Pancreas (tissue), 10 donors: ENCODE measurements at regions of chr7 and their contacts with region 1.

Region 1: DNA sequence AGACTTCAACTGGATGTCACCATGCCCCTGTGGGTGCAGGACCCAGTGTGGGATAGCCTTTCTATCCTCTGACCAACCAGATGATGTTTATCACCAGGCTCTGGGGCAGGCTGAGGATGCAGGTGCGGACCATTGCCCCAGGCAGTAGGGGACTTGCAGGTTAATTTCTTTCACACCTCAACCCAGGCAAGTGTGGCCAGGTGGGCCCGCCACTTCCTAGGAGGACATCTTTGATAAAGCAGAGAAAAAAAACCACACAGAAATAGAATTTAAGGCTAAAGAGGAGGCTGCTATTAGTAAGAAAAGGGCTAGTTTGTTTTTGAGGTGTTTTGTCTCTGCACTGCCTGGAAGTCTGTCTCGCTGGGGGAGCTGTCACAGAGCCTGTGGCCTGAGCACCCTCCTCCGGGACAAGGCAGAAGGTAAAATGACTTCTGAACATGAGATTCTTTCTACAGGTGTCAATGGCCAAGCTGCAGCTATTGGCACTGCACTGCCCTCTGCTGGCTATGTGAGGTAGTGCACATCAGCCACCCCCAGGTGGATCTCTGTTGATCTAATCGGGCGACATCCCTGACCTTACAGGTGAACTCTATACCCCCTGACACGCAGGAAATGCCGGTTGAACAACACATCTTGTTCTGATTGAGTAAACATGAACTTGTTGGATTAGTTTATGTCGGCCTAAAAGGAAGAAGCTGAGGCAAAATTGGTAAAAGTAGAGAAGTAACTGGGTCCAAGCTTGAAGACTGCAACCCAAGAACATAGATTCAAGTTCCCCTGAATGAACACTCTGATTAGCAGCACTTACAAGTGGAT is 21.0 kb downstream of the UPP1 start:
- DNase-seq: peak; percentile 65 to 96 (median 85)
- ATAC-seq: peak; percentile 87 to 99 (median 94)
- H3K4me3 ChIP-seq: no peak overlapping the region
- H3K27ac ChIP-seq: no peak overlapping the region
- H3K4me1 ChIP-seq: peaks cover 0 to 4% (median 0%) of the 10 kb centered on the region in 3 donors
- H3K27me3 ChIP-seq: no peaks in the 10 kb centered on the region
- CTCF ChIP-seq: peak; percentile 98 to 99 (median 99)

Region 2: DNA sequence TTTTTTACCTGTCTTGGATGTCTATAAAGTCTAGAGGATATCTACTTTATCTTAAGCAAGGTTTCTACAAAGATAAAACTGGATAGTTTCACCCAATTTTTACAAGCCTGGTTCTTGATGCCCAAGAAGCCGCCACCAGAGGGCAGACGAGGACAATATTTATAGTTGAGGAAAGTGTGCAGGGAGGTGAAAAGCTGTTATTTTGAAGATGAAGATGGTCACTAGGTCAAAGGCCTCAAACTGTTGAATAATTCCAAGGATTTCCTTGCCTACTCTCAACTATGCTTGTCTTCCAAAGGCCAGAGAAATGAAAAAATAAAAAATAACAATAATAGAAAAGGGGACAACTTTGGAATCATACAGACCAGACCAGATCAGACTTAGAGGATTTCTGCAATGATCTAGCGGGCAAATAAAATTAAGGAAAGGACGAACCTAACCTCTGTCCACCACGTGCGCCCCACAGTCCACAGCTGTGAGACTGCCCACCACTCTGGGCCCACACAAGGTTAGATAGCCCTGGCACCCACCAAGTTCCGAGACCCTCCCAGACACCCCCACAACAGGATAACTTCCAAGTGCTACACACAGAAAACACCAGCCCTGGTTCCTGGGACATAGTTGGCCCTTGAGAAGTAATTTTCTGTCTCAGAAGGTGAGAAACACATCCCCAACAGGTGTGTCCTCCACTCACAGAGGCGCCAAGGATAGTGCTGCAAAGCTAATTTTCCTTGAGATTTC is 164.6 kb before region 1 on chr7:
- intact Hi-C with region 1: loop called in 2 of 3 experiments (anchors 5 kb)
- DNase-seq: peak in 5 of 6 donors; percentile 45 to 91 (median 72)
- ATAC-seq: peak; percentile 63 to 87 (median 76)
- H3K4me3 ChIP-seq: no peak overlapping the region
- H3K27ac ChIP-seq: no peak overlapping the region
- H3K4me1 ChIP-seq: no peaks in the 10 kb centered on the region
- H3K27me3 ChIP-seq: no peaks in the 10 kb centered on the region
- CTCF ChIP-seq: peak; percentile 44 to 78 (median 66)

Region 3: GRCh38 chr7:47991741-47992311 is 118.2 kb before region 1 on chr7:
- intact Hi-C with region 1: loop called in 1 of 3 experiments (anchors 5 kb)
- DNase-seq: peak; percentile 73 to 93 (median 83)
- ATAC-seq: peak; percentile 98 to 100 (median 100)
- H3K4me3 ChIP-seq: peak overlapping the region; percentile 16 to 58 (median 34)
- H3K27ac ChIP-seq: peak overlapping the region in 3 of 4 donors; percentile 19 to 71 (median 41)
- H3K4me1 ChIP-seq: no peaks in the 10 kb centered on the region
- H3K27me3 ChIP-seq: no peaks in the 10 kb centered on the region
- CTCF ChIP-seq: peak in 2 of 4 donors; percentile 21 to 41

Region 4: GRCh38 chr7:48035301-48035966 is 74.6 kb before region 1 on chr7 and contains the start of gene C7orf57:
- intact Hi-C with region 1: loop called in 1 of 3 experiments (anchors 10 kb)
- DNase-seq: peak; percentile 87 to 96 (median 92)
- ATAC-seq: peak; percentile 99 to 100 (median 100)
- H3K4me3 ChIP-seq: peak within 1 kb of the TSS; percentile 11 to 59 (median 35)
- H3K27ac ChIP-seq: no peak within 1 kb of the TSS
- H3K4me1 ChIP-seq: peaks cover 0 to 3% (median 0%) of the 10 kb centered on the region in 3 donors
- H3K27me3 ChIP-seq: peaks cover 0 to 3% (median 0%) of the 10 kb centered on the region in 4 donors
- CTCF ChIP-seq: no peak
- total RNA-seq, gene C7orf57: not detected

Region 5: GRCh38 chr7:48295296-48295971 is 185.4 kb after region 1 on chr7:
- intact Hi-C with region 1: no loop called
- DNase-seq: no peak
- ATAC-seq: no peak
- H3K4me3 ChIP-seq: no peak overlapping the region
- H3K27ac ChIP-seq: no peak overlapping the region
- H3K4me1 ChIP-seq: no peaks in the 10 kb centered on the region
- H3K27me3 ChIP-seq: no peaks in the 10 kb centered on the region
- CTCF ChIP-seq: no peak